ENCODE measurements at regions of chr2 and their contacts with region 1.

Region 1: DNA sequence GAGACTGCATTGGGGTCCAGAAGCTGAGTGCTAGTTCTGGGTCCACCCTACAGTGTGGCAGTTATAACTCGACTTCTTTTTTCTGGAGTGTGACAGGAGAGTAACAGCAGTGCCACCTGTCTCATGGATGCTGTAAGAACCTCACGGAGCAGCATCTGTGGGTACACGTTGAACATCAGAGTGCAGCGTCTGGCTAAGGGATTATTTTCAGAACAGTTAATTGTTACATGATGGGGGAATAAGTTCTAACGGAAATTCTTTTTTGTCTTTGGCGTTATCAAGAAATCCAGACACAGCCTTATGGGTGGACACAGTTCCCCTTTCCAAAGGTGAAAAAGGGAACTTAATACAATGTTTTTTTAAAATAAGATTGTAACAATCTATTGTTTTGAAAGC is 28.3 kb upstream of the TOGARAM2 start:
- DNase-seq: peak; percentile 70 to 80
- ATAC-seq: peak; percentile 73 to 76
- H3K4me3 ChIP-seq: no peak overlapping the region
- H3K27ac ChIP-seq: peak overlapping the region; percentile 86 to 95 (median 92)
- H3K4me1 ChIP-seq: peaks cover 21 to 38% of the 10 kb centered on the region in 2 donors
- H3K27me3 ChIP-seq: no peaks in the 10 kb centered on the region
- CTCF ChIP-seq: peak in 3 of 5 experiments; percentile 4 to 22 (median 18)
- POLR2A ChIP-seq: peak in 1 of 2 donors; percentile 27

Region 2: GRCh38 chr2:28566521-28567041 is 386.2 kb before region 1 on chr2:
- in situ Hi-C with region 1: no loop called
- intact Hi-C with region 1: loop called (anchors 5 kb)
- DNase-seq: peak; percentile 67 to 78
- ATAC-seq: peak; percentile 81 to 90
- H3K4me3 ChIP-seq: peak overlapping the region; percentile 56 to 78 (median 67)
- H3K27ac ChIP-seq: peak overlapping the region; percentile 80 to 89 (median 85)
- H3K4me1 ChIP-seq: peaks cover 16 to 19% of the 10 kb centered on the region in 2 donors
- H3K27me3 ChIP-seq: no peaks in the 10 kb centered on the region
- CTCF ChIP-seq: peak in 4 of 5 experiments; percentile 100
- POLR2A ChIP-seq: no peak

Region 3: GRCh38 chr2:28583899-28584553 is 368.8 kb before region 1 on chr2:
- in situ Hi-C with region 1: no loop called
- intact Hi-C with region 1: loop called (anchors 5 kb)
- DNase-seq: peak; percentile 95 to 97
- ATAC-seq: peak; percentile 83
- H3K4me3 ChIP-seq: peak overlapping the region in 1 of 4 donors; percentile 8
- H3K27ac ChIP-seq: peak overlapping the region; percentile 90 to 99 (median 94)
- H3K4me1 ChIP-seq: peaks cover 66% of the 10 kb centered on the region in 2 donors
- H3K27me3 ChIP-seq: no peaks in the 10 kb centered on the region
- CTCF ChIP-seq: peak in 1 of 5 experiments; percentile 12
- POLR2A ChIP-seq: peak; percentile 58 to 74

Region 4: GRCh38 chr2:28716265-28716867 is 236.4 kb before region 1 on chr2:
- in situ Hi-C with region 1: no loop called
- intact Hi-C with region 1: loop called (anchors 5 kb)
- DNase-seq: peak; percentile 71 to 77
- ATAC-seq: peak; percentile 78 to 87
- H3K4me3 ChIP-seq: peak overlapping the region in 2 of 4 donors; percentile 1
- H3K27ac ChIP-seq: peak overlapping the region; percentile 91 to 98 (median 93)
- H3K4me1 ChIP-seq: peaks cover 22 to 24% of the 10 kb centered on the region in 2 donors
- H3K27me3 ChIP-seq: no peaks in the 10 kb centered on the region
- CTCF ChIP-seq: no peak
- POLR2A ChIP-seq: peak; percentile 40 to 65

Region 5: DNA sequence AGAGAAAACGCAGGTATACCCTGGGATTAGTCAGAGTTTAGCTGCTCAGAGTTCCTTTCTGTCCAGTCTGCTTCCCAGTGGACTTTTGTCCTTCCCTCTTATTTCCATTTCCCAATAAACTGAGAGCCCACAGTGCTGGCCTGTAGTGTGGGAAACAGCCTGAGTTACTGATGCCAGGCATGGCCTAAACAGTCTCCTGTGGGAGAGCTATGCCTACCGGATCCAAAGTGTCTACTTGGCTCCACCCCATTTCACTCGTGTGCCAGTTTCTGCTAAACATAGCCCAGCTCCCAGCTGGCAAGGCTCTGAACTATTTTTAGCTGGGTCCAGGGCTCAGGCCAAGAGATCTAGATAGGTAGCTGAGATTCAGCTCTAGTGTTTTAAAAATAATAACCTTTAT is 216.8 kb before region 1 on chr2:
- in situ Hi-C with region 1: no loop called
- intact Hi-C with region 1: no loop called
- DNase-seq: peak; percentile 83 to 96
- ATAC-seq: peak; percentile 100
- H3K4me3 ChIP-seq: peak overlapping the region in 1 of 4 donors; percentile 14
- H3K27ac ChIP-seq: peak overlapping the region; percentile 80 to 85 (median 84)
- H3K4me1 ChIP-seq: peaks cover 16 to 20% of the 10 kb centered on the region in 2 donors
- H3K27me3 ChIP-seq: no peaks in the 10 kb centered on the region
- CTCF ChIP-seq: no peak
- POLR2A ChIP-seq: peak in 1 of 2 donors; percentile 50

Region 6: DNA sequence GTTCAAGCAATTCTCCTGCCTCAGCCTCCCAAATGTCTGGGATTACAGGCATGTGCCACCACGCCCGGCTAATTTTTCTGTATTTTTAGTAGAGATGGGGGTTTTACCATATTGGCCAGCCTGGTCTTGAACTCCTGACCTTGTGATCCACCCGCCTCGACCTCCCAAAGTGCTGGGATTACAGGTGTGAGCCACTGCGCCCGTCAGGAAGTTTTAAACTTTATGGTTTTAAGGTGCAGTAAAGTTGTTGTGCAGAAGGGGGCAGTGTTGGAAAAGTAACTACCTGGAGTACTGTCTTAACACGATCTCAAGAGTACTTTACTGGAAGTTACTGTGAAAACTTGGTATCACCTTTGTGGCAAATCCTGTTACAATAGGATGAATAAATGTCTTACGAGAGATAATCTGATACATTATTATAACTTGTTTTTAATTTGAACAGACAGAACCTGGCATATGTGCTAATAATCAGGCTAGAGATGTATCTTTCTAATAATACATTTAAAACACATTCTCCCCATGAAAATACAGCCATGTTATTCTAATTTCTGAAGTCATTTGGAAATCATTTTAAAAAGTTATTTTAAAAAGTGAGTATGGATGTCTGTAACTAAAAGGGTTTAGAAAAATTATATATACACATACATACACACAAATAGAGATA is 131.4 kb before region 1 on chr2:
- in situ Hi-C with region 1: no loop called
- intact Hi-C with region 1: loop called (anchors 2 kb)
- DNase-seq: peak; percentile 12 to 28
- ATAC-seq: peak; percentile 70 to 94
- H3K4me3 ChIP-seq: no peak overlapping the region
- H3K27ac ChIP-seq: no peak overlapping the region
- H3K4me1 ChIP-seq: no peaks in the 10 kb centered on the region
- H3K27me3 ChIP-seq: no peaks in the 10 kb centered on the region
- CTCF ChIP-seq: peak; percentile 67 to 80 (median 74)
- POLR2A ChIP-seq: no peak

Region 7: DNA sequence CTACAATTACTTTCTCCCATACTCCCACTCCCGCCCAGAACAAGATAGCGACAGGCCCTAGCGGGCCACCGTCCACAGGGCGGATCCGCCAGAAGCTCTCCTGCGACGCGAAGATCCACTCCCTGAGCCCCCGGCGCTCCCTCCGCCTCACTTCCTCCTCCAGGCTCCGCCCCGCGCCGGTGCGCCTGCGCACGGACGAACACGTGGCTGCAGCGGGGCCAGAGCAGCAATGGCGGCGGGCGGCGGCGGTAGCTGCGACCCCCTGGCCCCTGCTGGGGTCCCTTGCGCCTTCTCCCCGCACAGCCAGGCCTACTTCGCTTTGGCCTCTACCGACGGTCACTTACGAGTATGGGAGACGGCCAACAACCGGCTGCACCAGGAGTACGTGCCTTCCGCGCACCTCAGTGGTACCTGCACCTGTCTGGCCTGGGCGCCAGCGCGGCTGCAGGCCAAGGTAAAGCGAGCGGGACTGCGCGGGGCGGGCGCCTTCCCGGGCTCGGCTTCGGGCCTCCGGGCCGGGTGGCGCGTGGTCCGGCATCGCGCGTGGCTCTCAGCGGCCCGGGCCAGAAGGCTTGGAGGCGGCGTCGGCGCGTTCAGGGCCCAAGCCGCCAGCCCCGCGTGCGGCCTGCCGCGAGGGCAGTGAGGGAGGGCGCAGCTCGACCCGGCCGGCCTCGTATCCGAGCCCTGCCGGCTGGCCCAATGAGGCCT is 58.2 kb before region 1 on chr2 and contains the start of gene WDR43:
- in situ Hi-C with region 1: no loop called
- intact Hi-C with region 1: loop called (anchors 2 kb)
- DNase-seq: peak; percentile 96 to 97
- ATAC-seq: peak; percentile 89 to 91
- H3K4me3 ChIP-seq: peak within 1 kb of the TSS; percentile 78 to 99 (median 88)
- H3K27ac ChIP-seq: peak within 1 kb of the TSS; percentile 88 to 94 (median 91)
- H3K4me1 ChIP-seq: peaks cover 30 to 41% of the 10 kb centered on the region in 2 donors
- H3K27me3 ChIP-seq: no peaks in the 10 kb centered on the region
- CTCF ChIP-seq: no peak
- POLR2A ChIP-seq: peak; percentile 94 to 95
- total RNA-seq, gene WDR43: 73.5 to 105 (median 81.1) TPM

Region 8: GRCh38 chr2:29115797-29116781 is 163.3 kb after region 1 on chr2:
- in situ Hi-C with region 1: no loop called
- intact Hi-C with region 1: loop called (anchors 2 kb)
- DNase-seq: peak; percentile 77 to 79
- ATAC-seq: peak; percentile 47 to 49
- H3K4me3 ChIP-seq: peak overlapping the region; percentile 63 to 75 (median 70)
- H3K27ac ChIP-seq: peak overlapping the region; percentile 85 to 94 (median 93)
- H3K4me1 ChIP-seq: peaks cover 42 to 58% of the 10 kb centered on the region in 2 donors
- H3K27me3 ChIP-seq: no peaks in the 10 kb centered on the region
- CTCF ChIP-seq: no peak
- POLR2A ChIP-seq: peak; percentile 51 to 69